ENCODE measurements at regions of chr5 and their contacts with region 1.

Region 1: DNA sequence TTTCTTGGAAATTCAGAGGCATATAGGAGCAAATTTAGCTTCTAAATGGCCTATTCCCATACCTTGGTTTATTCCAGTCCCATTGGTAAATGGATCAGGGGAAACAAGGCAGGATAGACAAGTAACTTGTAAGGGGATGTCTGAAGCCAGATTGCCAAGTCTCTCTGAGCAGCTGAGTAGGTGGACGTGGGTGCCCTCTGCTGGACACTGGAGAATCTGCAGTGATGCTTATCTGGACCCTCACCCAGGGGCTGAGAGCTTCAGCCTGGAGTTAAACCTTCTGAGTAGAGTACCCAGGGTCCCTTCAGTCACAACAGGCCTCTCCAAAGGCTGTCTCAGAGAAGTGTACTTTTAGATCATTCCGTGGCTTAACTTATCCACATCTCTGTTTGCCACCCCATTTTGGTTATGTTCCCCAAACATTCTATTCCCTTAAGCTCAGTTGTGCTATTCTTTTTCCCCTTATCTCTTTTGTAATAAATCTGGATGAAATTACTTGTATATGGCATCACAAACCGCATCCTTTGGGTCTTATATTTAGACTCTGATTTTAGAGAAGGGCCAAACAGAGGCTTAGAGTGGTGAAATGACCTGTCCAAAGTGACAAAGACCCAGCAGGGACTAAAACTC is 218.3 kb upstream of the GLRA1 start:
- DNase-seq: peak; percentile 77
- H3K4me3 Mint-ChIP-seq: no peak overlapping the region
- H3K27ac Mint-ChIP-seq: no peak overlapping the region
- H3K4me1 Mint-ChIP-seq: no peaks in the 10 kb centered on the region
- H3K27me3 Mint-ChIP-seq: no peaks in the 10 kb centered on the region

Region 2: DNA sequence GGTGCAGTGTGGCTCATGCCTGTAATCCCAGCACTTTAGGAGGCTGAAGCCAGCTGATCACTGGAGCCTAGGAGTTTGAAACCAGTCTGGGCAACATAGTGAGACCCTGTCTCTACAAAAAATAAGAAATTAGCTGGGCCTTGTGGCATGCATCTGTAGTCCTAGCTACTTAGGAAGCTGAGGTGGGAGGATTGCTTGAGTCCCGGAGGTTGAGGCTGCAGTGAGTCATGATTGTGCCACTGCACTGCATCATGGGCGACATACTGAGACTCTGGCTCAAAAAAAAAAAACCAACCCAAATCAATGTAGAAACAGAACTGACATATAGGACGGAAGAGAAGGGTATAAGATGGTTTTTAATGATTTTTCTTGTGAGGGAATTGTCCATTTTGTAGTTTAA is 343.5 kb before region 1 on chr5:
- CTCF ChIA-PET with region 1: interaction called, 10 read pairs
- intact Hi-C with region 1: no loop called
- DNase-seq: no peak
- H3K4me3 Mint-ChIP-seq: no peak overlapping the region
- H3K27ac Mint-ChIP-seq: peak overlapping the region; percentile 31
- H3K4me1 Mint-ChIP-seq: peaks cover 41% of the 10 kb centered on the region
- H3K27me3 Mint-ChIP-seq: no peaks in the 10 kb centered on the region

Region 3: GRCh38 chr5:151825445-151825844 is 317.5 kb before region 1 on chr5:
- CTCF ChIA-PET with region 1: interaction called, 110 read pairs
- intact Hi-C with region 1: loop called (anchors 1 kb)
- DNase-seq: peak; percentile 52
- H3K4me3 Mint-ChIP-seq: no peak overlapping the region
- H3K27ac Mint-ChIP-seq: no peak overlapping the region
- H3K4me1 Mint-ChIP-seq: peaks cover 3% of the 10 kb centered on the region
- H3K27me3 Mint-ChIP-seq: no peaks in the 10 kb centered on the region

Region 4: DNA sequence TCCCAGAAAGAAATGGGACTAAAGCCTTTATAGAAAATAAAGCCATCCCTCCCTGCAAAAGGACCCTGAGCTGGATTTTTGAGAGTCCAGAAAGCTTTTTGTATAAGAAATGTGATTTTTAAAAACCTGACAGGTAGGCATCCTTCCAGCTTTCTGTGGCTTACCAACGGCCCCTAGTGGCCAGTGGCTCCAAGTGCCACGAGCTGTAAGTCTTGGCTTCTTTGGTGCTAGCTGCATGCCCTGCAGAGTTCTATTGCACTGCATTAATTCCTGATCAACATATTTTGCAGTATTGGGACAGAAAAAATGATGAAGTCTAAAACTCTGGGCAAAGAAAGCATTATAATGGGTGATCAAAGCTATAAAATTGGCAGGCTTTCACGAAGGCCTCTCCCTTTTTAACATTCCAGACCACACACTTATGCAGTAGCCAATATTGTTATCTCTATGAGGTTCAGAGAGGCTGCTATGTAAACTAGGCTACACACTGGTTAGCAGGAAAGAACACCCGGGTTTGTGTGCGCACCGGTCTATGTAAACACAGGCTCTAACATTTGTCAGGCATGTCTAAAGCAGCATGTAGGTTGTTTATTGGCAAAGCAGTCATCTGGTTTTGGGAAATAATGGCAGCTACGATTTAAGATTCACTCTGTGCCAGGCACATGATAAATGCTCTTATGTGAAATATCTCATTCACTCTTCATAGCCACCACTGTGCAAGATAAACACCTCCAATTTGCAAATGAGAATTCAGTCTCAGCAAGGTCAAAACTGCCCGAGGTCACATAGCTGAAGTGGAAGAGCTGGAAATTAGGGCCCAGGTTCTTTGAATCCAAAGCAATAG is 206.9 kb after region 1 on chr5:
- CTCF ChIA-PET with region 1: interaction called, 16 read pairs
- intact Hi-C with region 1: loop called (anchors 2 kb)
- DNase-seq: peak; percentile 56
- H3K4me3 Mint-ChIP-seq: no peak overlapping the region
- H3K27ac Mint-ChIP-seq: no peak overlapping the region
- H3K4me1 Mint-ChIP-seq: no peaks in the 10 kb centered on the region
- H3K27me3 Mint-ChIP-seq: peaks cover 8% of the 10 kb centered on the region